H1 (cell line): ENCODE measurements at regions of chr7 and their contacts with region 1.

Region 1: GRCh38 chr7:150962553-150963399 is 15.3 kb downstream of the KCNH2 start:
- DNase-seq: peak in 1 of 2 experiments; percentile 83
- H3K4me3 ChIP-seq: no peak overlapping the region
- H3K27ac ChIP-seq: no peak overlapping the region
- H3K4me1 ChIP-seq: peaks cover 0 to 4% (median 3%) of the 10 kb centered on the region in 4 experiments; a peak in 3 of 7 replicates
- H3K27me3 ChIP-seq: peaks cover 0 to 21% (median 9%) of the 10 kb centered on the region in 4 experiments; a peak in 5 of 7 replicates
- CTCF ChIP-seq: peak in 2 of 3 experiments; percentile 97 to 98; a peak in 3 of 4 replicates
- EP300 ChIP-seq: no peak
- POLR2A ChIP-seq: no peak
- RAD21 ChIP-seq: peak; percentile 97 to 99

Region 2: DNA sequence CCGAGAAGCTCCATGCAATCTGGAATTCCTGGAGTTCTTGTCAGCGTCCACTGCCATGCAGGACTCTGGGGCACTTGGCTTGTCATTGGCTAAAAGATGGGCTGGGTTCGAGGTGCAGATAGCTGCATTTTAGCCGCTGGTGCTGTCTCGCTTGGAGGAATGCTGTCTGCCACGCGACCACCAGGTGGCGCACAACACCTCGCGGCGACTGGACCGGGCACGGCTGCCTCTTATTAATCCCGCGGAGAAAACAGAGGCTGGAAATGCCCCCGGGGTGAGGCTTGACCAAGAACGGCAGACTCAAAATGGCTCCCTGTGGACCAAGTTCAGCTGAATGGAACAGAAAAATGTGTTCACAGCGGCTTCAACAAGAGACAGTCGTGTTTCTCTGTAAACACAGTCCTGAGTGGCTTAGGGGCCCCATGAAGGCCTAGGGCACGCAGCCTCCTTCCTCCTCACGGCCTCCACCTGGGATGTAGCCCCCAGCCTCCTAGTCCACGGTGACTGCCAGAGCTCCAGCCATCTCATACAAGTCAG is 64.2 kb before region 1 on chr7:
- CTCF ChIA-PET with region 1: interaction called, 15 read pairs
- POLR2A ChIA-PET with region 1: no interaction called
- DNase-seq: peak; percentile 60 to 96
- H3K4me3 ChIP-seq: no peak overlapping the region
- H3K27ac ChIP-seq: no peak overlapping the region
- H3K4me1 ChIP-seq: peaks cover 0 to 28% (median 7%) of the 10 kb centered on the region in 4 experiments; a peak in 4 of 7 replicates
- H3K27me3 ChIP-seq: peaks cover 0 to 11% (median 6%) of the 10 kb centered on the region in 4 experiments; a peak in 4 of 7 replicates
- CTCF ChIP-seq: peak; percentile 92 to 97 (median 96)
- EP300 ChIP-seq: no peak
- POLR2A ChIP-seq: no peak
- RAD21 ChIP-seq: peak; percentile 81 to 88

Region 3: GRCh38 chr7:150919160-150919559 is 43.6 kb before region 1 on chr7:
- CTCF ChIA-PET with region 1: interaction called, 10 read pairs
- POLR2A ChIA-PET with region 1: no interaction called
- DNase-seq: no peak
- H3K4me3 ChIP-seq: no peak overlapping the region
- H3K27ac ChIP-seq: no peak overlapping the region
- H3K4me1 ChIP-seq: no peaks in the 10 kb centered on the region; a peak in 1 of 7 replicates
- H3K27me3 ChIP-seq: no peaks in the 10 kb centered on the region
- CTCF ChIP-seq: no peak
- EP300 ChIP-seq: no peak
- POLR2A ChIP-seq: no peak
- RAD21 ChIP-seq: no peak

Region 4: DNA sequence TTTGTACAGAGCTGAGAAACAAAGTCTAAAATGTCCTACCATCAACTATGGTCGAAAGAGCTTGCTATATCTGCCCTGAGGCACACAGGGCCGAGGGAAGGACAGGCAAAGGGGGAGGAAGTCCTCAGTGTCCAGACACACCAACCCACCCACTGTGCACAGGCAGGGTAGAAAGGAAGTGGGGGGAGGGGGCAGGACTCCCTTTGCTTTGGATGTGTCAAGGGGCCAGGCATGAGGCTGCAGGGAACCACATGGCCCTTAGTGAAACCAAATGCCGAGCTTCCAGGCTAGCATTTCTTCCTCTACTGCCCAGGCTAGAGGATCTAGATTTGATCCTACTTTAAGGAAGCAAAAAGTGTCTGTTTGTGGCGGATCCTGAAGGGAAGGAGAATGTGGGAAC is 13.2 kb before region 1 on chr7:
- CTCF ChIA-PET with region 1: interaction called, 797 read pairs
- POLR2A ChIA-PET with region 1: interaction called, 6 read pairs
- DNase-seq: no peak
- H3K4me3 ChIP-seq: no peak overlapping the region
- H3K27ac ChIP-seq: no peak overlapping the region
- H3K4me1 ChIP-seq: peaks cover 0 to 40% (median 26%) of the 10 kb centered on the region in 4 experiments; a peak in 6 of 7 replicates
- H3K27me3 ChIP-seq: peaks cover 0 to 18% (median 13%) of the 10 kb centered on the region in 4 experiments; a peak in 5 of 7 replicates
- CTCF ChIP-seq: no peak
- EP300 ChIP-seq: no peak
- POLR2A ChIP-seq: no peak
- RAD21 ChIP-seq: no peak

Region 5: GRCh38 chr7:151008511-151009323 is 45.9 kb after region 1 on chr7:
- CTCF ChIA-PET with region 1: interaction called, 95 read pairs
- POLR2A ChIA-PET with region 1: interaction called, 3 read pairs
- DNase-seq: peak; percentile 75 to 99
- H3K4me3 ChIP-seq: peak overlapping the region in 1 of 4 experiments; percentile 27; a peak in 1 of 8 replicates
- H3K27ac ChIP-seq: no peak overlapping the region
- H3K4me1 ChIP-seq: peaks cover 0 to 28% (median 22%) of the 10 kb centered on the region in 4 experiments; a peak in 6 of 7 replicates
- H3K27me3 ChIP-seq: peaks cover 0 to 3% (median 0%) of the 10 kb centered on the region in 4 experiments; a peak in 2 of 7 replicates
- CTCF ChIP-seq: peak in 2 of 3 experiments; percentile 90 to 92; a peak in 3 of 4 replicates
- EP300 ChIP-seq: 0 out of 3 replicates have a peak, but pooled peaks of 1 of the 2 experiments have one; percentile 22
- POLR2A ChIP-seq: no peak
- RAD21 ChIP-seq: peak; percentile 21 to 53; a peak in 3 of 4 replicates

Region 6: GRCh38 chr7:151045262-151045661 is 82.5 kb after region 1 on chr7:
- CTCF ChIA-PET with region 1: no interaction called
- POLR2A ChIA-PET with region 1: no interaction called
- DNase-seq: no peak
- H3K4me3 ChIP-seq: no peak overlapping the region
- H3K27ac ChIP-seq: no peak overlapping the region
- H3K4me1 ChIP-seq: no peaks in the 10 kb centered on the region
- H3K27me3 ChIP-seq: peaks cover under 1 to 19% (median 10%) of the 10 kb centered on the region in 4 experiments
- CTCF ChIP-seq: no peak
- EP300 ChIP-seq: no peak
- POLR2A ChIP-seq: no peak
- RAD21 ChIP-seq: no peak